ENCODE measurements at regions of chr16 and their contacts with region 1.

Region 1: DNA sequence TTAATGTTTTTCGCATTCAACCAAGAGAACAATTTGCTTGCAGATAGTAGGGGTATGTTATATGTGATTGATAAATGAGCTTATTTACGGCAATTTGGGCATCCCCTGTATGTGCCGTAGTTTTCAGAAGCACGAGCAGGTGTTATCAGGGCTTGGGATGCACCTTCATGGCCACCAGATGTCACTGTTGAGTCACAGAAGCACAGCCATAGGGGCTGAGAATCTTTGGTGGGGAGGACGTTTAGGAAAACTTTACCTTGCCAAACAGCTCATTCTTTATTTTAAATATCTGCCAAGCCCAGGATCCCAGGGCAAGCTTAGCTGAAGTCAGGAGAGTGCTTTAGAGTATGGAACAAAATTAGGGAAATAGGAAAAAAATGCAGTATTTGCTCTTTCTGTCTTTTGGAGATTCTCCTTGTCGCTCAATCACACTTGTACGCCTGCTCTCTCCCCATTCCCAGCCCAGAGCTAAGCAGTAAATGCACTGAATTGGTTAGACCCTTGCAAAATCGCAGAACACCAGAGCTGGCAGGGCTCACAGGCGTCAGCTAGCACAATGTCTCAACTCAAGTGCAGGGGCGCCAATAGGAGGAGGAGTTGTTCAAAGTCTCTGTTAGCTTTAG is 93.6 kb upstream of the MPHOSPH6 start:
- DNase-seq: peak; percentile 55 to 67 (median 58)
- ATAC-seq: peak; percentile 63
- H3K4me3 ChIP-seq: no peak overlapping the region
- H3K27ac ChIP-seq: no peak overlapping the region
- H3K4me1 ChIP-seq: peaks cover 5% of the 10 kb centered on the region
- H3K27me3 ChIP-seq: no peaks in the 10 kb centered on the region
- CTCF ChIP-seq: peak; percentile 76 to 91 (median 85)
- POLR2A ChIP-seq: no peak

Region 2: GRCh38 chr16:82357237-82357636 is 93.6 kb after region 1 on chr16:
- intact Hi-C with region 1: no loop called
- DNase-seq: no peak
- ATAC-seq: no peak
- H3K4me3 ChIP-seq: no peak overlapping the region
- H3K27ac ChIP-seq: no peak overlapping the region
- H3K4me1 ChIP-seq: peaks cover 6% of the 10 kb centered on the region
- H3K27me3 ChIP-seq: no peaks in the 10 kb centered on the region
- CTCF ChIP-seq: no peak
- POLR2A ChIP-seq: no peak

Region 3: DNA sequence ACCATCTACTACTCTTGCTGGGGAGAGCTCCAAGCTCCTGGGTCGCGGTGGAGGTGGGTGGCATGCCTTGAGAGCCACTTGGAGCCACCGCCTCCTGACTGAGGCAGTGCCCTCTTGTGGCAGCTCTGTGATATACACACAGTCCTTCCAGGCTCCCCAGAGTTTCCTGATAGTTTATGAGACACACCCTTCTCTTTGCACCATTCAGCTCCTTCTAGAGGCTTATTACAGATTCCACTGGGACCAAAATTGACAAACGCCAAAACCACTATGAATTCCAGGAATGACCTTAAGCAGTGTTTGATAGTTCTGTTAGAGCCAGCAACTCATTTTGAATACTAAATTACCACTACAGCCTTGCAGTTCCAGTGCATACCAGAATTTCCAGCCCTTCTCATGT is 193.1 kb after region 1 on chr16:
- intact Hi-C with region 1: loop called (anchors 10 kb)
- DNase-seq: peak; percentile 54 to 69 (median 58)
- ATAC-seq: peak; percentile 74
- H3K4me3 ChIP-seq: no peak overlapping the region
- H3K27ac ChIP-seq: no peak overlapping the region
- H3K4me1 ChIP-seq: no peaks in the 10 kb centered on the region
- H3K27me3 ChIP-seq: no peaks in the 10 kb centered on the region
- CTCF ChIP-seq: peak; percentile 29 to 77 (median 66)
- POLR2A ChIP-seq: no peak

Region 4: DNA sequence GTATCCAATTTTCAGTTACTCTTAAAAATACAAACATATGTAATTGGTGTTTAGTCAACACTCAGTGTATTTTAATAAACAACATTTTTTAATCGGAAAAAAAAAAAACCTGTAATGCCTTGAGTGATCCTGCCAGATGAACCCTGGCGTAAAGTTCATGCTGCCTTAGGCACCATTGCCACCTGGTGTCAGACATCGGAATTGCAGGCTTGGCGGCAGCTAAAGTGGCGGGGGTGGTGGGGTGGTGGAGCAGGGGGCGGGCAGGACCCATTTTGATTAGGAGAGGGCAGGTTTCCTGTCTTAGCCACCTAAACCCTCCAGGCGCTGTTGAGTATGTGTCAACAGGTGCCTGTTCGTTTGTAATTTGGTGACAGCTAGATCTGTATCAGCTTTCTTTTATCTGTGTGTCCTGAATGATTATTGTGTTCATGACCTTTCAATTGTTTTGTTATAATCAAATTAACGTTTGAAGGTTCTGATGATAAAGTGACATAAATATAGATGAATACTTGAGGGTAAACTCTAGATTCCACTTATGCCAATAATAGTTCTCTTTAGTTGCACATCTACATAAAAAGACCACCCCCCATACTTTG is 951.9 kb after region 1 on chr16:
- intact Hi-C with region 1: loop called (anchors 10 kb)
- DNase-seq: peak in 2 of 4 donors; percentile 36 to 44
- ATAC-seq: no peak
- H3K4me3 ChIP-seq: no peak overlapping the region
- H3K27ac ChIP-seq: no peak overlapping the region
- H3K4me1 ChIP-seq: no peaks in the 10 kb centered on the region
- H3K27me3 ChIP-seq: no peaks in the 10 kb centered on the region
- CTCF ChIP-seq: peak; percentile 46 to 76 (median 54)
- POLR2A ChIP-seq: no peak